Heart right ventricle (tissue), 16 donors: ENCODE measurements at regions of chr6 and their contacts with region 1.

Region 1: DNA sequence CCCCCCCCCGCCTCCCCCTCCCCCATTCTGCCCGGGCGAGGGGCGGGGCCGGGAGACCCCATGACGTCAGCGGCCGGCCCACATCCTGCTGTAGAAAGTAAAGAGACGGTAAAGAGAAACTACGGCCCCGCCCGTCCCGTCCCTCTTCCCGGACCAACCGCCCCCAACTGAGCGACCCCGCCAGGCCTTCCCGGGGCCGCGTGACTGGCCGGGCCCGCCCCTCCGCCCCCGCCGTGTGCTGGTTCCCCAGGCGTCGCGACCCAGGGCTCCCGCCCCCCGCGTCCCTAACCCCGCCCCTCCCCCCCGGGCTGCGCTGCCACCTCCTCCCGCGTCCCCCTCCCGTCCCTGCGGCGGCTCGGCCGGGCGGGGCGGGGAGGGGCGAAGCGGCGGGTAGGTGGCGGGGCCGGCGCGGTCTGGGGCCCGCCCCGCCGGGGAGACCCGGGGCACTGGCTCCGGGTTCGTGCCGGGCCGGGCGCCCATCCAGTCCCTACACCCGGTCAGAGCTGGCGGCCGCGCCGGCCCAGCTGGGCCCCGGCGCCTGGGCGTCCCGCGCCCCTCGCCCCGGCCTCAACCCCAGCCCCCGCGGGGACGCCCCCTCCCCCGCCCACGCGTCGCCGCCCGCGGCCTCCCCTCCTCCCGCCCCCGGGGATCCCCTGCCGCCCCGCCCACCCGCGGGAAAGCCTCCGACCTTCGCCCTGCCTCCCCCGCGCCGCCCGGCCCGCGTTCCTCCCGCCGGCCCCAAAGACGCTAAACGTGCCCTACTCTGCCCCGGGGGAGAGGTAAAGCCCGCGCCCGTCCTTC is 636 bp upstream of the HIVEP1 start:
- DNase-seq: peak; percentile 97 to 98
- ATAC-seq: peak; percentile 91 to 97 (median 94)
- H3K4me3 ChIP-seq: peak overlapping the region; percentile 53 to 92 (median 73)
- H3K27ac ChIP-seq: peak overlapping the region; percentile 81 to 98 (median 96)
- H3K4me1 ChIP-seq: peaks cover 4 to 39% (median 30%) of the 10 kb centered on the region in 9 donors
- H3K27me3 ChIP-seq: no peaks in the 10 kb centered on the region
- CTCF ChIP-seq: no peak

Region 2: GRCh38 chr6:11700118-11700718 is 311.3 kb before region 1 on chr6:
- intact Hi-C with region 1: loop called in 5 of 10 experiments (anchors 5 to 10 kb)
- DNase-seq: no peak
- ATAC-seq: no peak
- H3K4me3 ChIP-seq: no peak overlapping the region
- H3K27ac ChIP-seq: no peak overlapping the region
- H3K4me1 ChIP-seq: peaks cover 0 to 9% (median 0%) of the 10 kb centered on the region in 9 donors
- H3K27me3 ChIP-seq: no peaks in the 10 kb centered on the region
- CTCF ChIP-seq: peak; percentile 33 to 69 (median 51)

Region 3: DNA sequence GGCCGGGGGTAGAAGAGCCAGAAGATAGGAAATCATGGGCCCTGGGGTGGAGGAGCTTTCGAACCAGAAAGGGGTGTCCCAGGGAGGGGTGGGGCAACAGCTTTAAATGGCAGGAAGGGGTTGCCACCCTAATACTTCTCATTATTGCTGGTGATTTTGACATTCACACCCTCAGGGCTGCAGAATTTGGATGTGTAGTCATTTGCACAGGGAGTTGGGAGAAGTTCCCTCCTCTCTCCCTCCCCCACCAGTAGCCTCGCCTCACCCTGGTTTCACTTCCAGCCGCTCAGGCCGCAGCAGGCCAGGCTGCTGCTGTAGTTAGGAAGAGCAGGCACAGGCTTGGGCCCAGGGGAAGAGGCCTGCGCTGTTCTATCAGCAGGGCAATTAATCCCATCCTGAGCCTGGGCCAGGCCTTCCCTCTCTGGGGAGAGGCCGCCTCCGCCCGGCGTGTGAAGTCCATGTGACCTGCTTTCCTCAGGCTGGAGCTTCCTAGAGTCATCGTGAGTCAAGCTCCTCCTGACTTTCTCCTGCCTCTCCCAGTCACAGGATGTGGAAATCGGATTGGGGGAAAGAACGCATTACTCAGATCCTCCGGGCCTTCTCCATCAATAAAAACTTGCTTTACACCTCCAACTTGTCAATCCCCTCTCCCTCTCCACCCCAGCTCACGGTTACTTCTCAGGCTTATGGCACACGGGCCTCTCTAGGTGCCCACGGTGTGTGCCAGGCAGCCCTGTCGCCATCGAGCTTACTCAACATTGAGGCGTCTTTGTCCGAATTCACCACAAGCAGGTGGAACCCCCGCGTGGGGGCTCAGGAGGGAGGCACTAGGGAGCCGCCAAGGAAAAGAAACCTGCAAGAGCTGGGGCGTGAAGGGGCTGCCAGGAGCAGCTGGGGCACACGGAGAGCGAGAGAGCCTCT is 240.7 kb before region 1 on chr6:
- intact Hi-C with region 1: loop called in 1 of 10 experiments (anchors 5 kb)
- DNase-seq: peak; percentile 86 to 88
- ATAC-seq: peak; percentile 96 to 98 (median 97)
- H3K4me3 ChIP-seq: peak overlapping the region in 1 of 10 donors; percentile 8
- H3K27ac ChIP-seq: peak overlapping the region; percentile 27 to 89 (median 74)
- H3K4me1 ChIP-seq: peaks cover 0 to 43% (median 13%) of the 10 kb centered on the region in 9 donors
- H3K27me3 ChIP-seq: peaks cover 0 to 6% (median 0%) of the 10 kb centered on the region in 7 donors
- CTCF ChIP-seq: no peak

Region 4: GRCh38 chr6:11810039-11810541 is 201.4 kb before region 1 on chr6:
- intact Hi-C with region 1: loop called in 2 of 10 experiments (anchors 5 to 10 kb)
- DNase-seq: peak; percentile 59 to 86
- ATAC-seq: peak; percentile 77 to 98 (median 94)
- H3K4me3 ChIP-seq: no peak overlapping the region
- H3K27ac ChIP-seq: peak overlapping the region in 9 of 10 donors; percentile 36 to 73 (median 67)
- H3K4me1 ChIP-seq: peaks cover 0 to 33% (median 20%) of the 10 kb centered on the region in 9 donors
- H3K27me3 ChIP-seq: no peaks in the 10 kb centered on the region
- CTCF ChIP-seq: no peak

Region 5: DNA sequence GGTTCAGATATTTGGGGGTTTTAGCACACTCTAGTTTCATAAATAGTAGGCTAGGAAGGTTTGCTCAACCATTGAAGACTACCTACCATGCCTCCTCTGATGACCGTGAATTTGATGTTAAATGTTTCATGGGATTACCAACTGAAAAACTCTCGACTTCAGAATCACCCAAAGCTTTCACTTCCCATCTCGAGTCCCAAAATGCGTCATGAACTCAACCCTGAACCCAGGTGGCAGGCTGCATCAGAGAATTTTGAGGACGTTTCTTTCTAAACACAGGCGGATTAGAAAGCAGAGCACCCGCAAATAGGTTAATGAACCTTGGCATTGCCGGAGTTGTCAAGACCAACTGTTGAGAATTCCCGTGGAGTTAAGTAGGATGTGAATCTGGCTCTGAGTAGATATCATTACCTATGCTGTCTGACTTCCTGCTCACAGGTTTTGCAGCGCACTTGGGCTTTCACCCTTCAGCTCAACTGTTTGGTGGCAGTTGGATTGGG is 134.5 kb before region 1 on chr6:
- intact Hi-C with region 1: loop called in 1 of 10 experiments (anchors 5 kb)
- DNase-seq: no peak
- ATAC-seq: no peak
- H3K4me3 ChIP-seq: no peak overlapping the region
- H3K27ac ChIP-seq: no peak overlapping the region
- H3K4me1 ChIP-seq: no peaks in the 10 kb centered on the region
- H3K27me3 ChIP-seq: no peaks in the 10 kb centered on the region
- CTCF ChIP-seq: no peak

Region 6: GRCh38 chr6:11968241-11968806 is 43.2 kb before region 1 on chr6:
- intact Hi-C with region 1: loop called in 1 of 10 experiments (anchors 5 kb)
- DNase-seq: no peak
- ATAC-seq: peak in 1 of 8 donors; percentile 67
- H3K4me3 ChIP-seq: no peak overlapping the region
- H3K27ac ChIP-seq: peak overlapping the region in 5 of 10 donors; percentile 34 to 66 (median 40)
- H3K4me1 ChIP-seq: peaks cover 0 to 21% (median 6%) of the 10 kb centered on the region in 9 donors
- H3K27me3 ChIP-seq: no peaks in the 10 kb centered on the region
- CTCF ChIP-seq: no peak

Region 7: DNA sequence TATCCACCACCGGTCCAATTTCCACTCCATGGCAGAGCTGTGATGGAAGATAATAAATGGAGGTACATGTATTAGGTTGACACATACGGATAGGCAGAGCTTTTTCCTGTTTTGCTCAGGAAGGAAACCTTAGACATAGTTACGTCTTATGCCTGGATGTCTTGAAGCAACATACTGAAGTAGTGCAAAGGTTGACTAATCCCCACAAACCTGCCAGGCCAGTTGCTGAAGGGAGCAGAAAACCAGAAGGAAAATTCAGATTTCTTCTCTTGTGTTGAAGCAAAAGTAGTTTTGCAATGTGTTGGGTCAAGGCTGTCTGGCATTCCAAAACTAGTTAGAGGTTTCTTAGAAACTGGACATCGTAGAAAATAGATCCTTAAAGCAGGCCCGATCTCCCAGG is 773.8 kb after region 1 on chr6:
- intact Hi-C with region 1: no loop called
- DNase-seq: no peak
- ATAC-seq: no peak
- H3K4me3 ChIP-seq: no peak overlapping the region
- H3K27ac ChIP-seq: no peak overlapping the region
- H3K4me1 ChIP-seq: no peaks in the 10 kb centered on the region
- H3K27me3 ChIP-seq: peaks cover 0 to 8% (median 0%) of the 10 kb centered on the region in 7 donors
- CTCF ChIP-seq: no peak